Sigmoid colon (tissue), 7 donors: ENCODE measurements at regions of chr7 and their contacts with region 1.

Region 1: GRCh38 chr7:99171731-99172130 is 27.8 kb upstream of the SMURF1 start:
- DNase-seq: no peak
- H3K4me3 ChIP-seq: no peak overlapping the region
- H3K27ac ChIP-seq: no peak overlapping the region
- H3K4me1 ChIP-seq: no peaks in the 10 kb centered on the region
- H3K27me3 ChIP-seq: no peaks in the 10 kb centered on the region
- CTCF ChIP-seq: no peak
- EP300 ChIP-seq: no peak
- POLR2A ChIP-seq: no peak

Region 2: DNA sequence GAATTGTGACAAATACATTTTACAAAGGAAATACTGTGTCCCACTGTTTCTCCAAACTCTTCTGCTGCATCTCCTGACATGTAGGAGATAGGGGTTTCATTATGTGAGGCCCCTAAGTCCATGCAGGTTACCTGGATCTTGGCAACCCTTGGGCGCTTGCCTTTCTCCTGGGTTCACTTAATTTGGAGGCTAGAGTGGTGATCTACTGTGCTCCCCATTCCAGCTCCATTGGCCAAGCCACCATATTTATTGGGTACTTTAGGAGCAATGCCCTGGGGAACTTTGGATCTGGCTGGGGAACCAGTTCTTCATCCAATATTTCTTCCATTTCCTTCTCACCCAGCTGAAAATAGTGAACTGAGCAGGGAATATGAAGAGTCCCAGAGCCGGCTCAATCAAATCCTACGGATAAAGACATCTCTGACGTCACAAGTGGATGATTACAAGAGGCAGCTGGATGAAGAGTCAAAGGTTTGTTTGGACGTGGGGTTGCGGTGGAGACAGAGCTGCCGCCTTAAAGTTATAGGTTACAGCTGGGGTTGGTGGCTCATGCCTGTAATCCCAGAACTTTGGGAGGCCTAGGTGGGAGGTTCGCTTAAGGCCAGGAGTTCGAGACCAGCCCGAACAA is 119.4 kb after region 1 on chr7:
- intact Hi-C with region 1: loop called (anchors 10 kb)
- DNase-seq: no peak
- H3K4me3 ChIP-seq: no peak overlapping the region
- H3K27ac ChIP-seq: no peak overlapping the region
- H3K4me1 ChIP-seq: no peaks in the 10 kb centered on the region
- H3K27me3 ChIP-seq: no peaks in the 10 kb centered on the region
- CTCF ChIP-seq: no peak
- EP300 ChIP-seq: no peak
- POLR2A ChIP-seq: no peak